WTC11 (cell line): ENCODE measurements at regions of chr16 and their contacts with region 1.

Region 1: GRCh38 chr16:27109666-27110523 is 43.2 kb downstream of the C16orf82 start:
- DNase-seq: peak; percentile 93
- ATAC-seq: peak; percentile 83
- H3K4me3 Mint-ChIP-seq: peak overlapping the region; percentile 75
- H3K27ac Mint-ChIP-seq: no peak overlapping the region
- H3K4me1 Mint-ChIP-seq: peaks cover 28% of the 10 kb centered on the region
- H3K27me3 Mint-ChIP-seq: peaks cover 7% of the 10 kb centered on the region; the same call in 1 of the 2 replicates
- CTCF ChIP-seq: peak; percentile 99

Region 2: DNA sequence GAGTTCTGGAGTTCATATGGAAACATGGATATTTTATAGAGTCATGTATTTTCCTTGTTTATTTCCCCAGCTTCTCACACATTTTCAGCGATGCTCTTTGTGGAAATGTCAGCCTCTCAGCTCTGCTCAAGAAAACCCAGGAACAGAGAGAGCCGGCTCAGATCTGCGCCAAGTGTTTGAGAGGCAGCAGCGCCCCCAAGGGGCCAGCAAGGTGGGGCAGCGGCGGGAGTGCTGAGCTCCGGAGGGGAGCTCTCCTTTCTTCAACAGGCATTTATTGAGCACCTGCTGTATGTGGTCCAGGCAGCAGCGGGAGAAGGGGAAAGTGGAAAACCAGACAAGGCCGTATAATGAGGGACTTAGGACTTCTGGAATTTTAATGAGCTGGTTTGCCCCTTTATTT is 464.3 kb before region 1 on chr16:
- CTCF ChIA-PET with region 1: interaction called, 22 read pairs
- POLR2A ChIA-PET with region 1: no interaction called
- DNase-seq: peak; percentile 80
- ATAC-seq: peak; percentile 95
- H3K4me3 Mint-ChIP-seq: no peak overlapping the region
- H3K27ac Mint-ChIP-seq: no peak overlapping the region
- H3K4me1 Mint-ChIP-seq: peaks cover 13% of the 10 kb centered on the region
- H3K27me3 Mint-ChIP-seq: no peaks in the 10 kb centered on the region
- CTCF ChIP-seq: peak; percentile 79

Region 3: GRCh38 chr16:26930786-26931581 is 178.9 kb before region 1 on chr16:
- CTCF ChIA-PET with region 1: interaction called, 13 read pairs
- POLR2A ChIA-PET with region 1: no interaction called
- DNase-seq: no peak
- ATAC-seq: no peak
- H3K4me3 Mint-ChIP-seq: no peak overlapping the region
- H3K27ac Mint-ChIP-seq: no peak overlapping the region
- H3K4me1 Mint-ChIP-seq: no peaks in the 10 kb centered on the region
- H3K27me3 Mint-ChIP-seq: peaks cover 3% of the 10 kb centered on the region; the same call in 1 of the 2 replicates
- CTCF ChIP-seq: no peak

Region 4: DNA sequence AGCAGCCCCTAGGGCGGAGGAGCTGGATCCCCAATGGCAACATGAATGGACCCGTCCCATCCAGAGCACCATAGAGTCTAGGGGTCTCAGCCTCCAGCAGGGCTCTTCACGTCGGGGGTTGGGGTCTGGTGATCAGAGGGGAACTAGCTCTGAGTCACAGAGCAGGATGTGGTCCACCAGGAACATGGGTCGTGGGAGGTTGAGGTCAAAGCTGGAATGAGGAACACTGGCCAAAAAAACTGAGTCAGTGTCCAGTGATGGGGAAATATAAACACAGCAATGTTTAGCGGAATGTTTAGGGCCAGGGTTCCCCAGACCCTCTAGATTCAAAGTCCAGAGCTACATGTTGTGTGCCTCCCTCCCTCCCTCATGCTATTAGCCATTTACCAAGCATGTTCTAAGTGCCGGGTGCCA is 122.3 kb before region 1 on chr16:
- CTCF ChIA-PET with region 1: interaction called, 33 read pairs
- POLR2A ChIA-PET with region 1: interaction called, 3 read pairs
- DNase-seq: no peak
- ATAC-seq: no peak
- H3K4me3 Mint-ChIP-seq: no peak overlapping the region
- H3K27ac Mint-ChIP-seq: peak overlapping the region; percentile 99; the same call in 1 of the 2 replicates
- H3K4me1 Mint-ChIP-seq: peaks cover 49% of the 10 kb centered on the region
- H3K27me3 Mint-ChIP-seq: peaks cover 6% of the 10 kb centered on the region; the same call in 1 of the 2 replicates
- CTCF ChIP-seq: no peak

Region 5: GRCh38 chr16:27066668-27067537 is 43.0 kb before region 1 on chr16 and contains the start of gene C16orf82:
- CTCF ChIA-PET with region 1: interaction called, 30 read pairs
- POLR2A ChIA-PET with region 1: no interaction called
- DNase-seq: peak; percentile 64
- ATAC-seq: peak; percentile 93
- H3K4me3 Mint-ChIP-seq: no peak within 1 kb of the TSS; the same call in 1 of the 2 replicates
- H3K27ac Mint-ChIP-seq: no peak within 1 kb of the TSS
- H3K4me1 Mint-ChIP-seq: peaks cover 6% of the 10 kb centered on the region
- H3K27me3 Mint-ChIP-seq: peaks cover 2% of the 10 kb centered on the region
- CTCF ChIP-seq: no peak
- total RNA-seq, gene C16orf82: not detected in 3 replicates

Region 6: GRCh38 chr16:27138266-27138665 is 28.4 kb after region 1 on chr16:
- CTCF ChIA-PET with region 1: interaction called, 5 read pairs
- POLR2A ChIA-PET with region 1: interaction called, 11 read pairs
- DNase-seq: no peak
- ATAC-seq: no peak
- H3K4me3 Mint-ChIP-seq: no peak overlapping the region
- H3K27ac Mint-ChIP-seq: no peak overlapping the region
- H3K4me1 Mint-ChIP-seq: peaks cover 8% of the 10 kb centered on the region
- H3K27me3 Mint-ChIP-seq: peaks cover 4% of the 10 kb centered on the region
- CTCF ChIP-seq: no peak

Region 7: GRCh38 chr16:27367461-27368357 is 257.8 kb after region 1 on chr16:
- CTCF ChIA-PET with region 1: interaction called, 15 read pairs
- POLR2A ChIA-PET with region 1: no interaction called
- DNase-seq: peak; percentile 83
- ATAC-seq: peak; percentile 88
- H3K4me3 Mint-ChIP-seq: peak overlapping the region; percentile 4; the same call in 1 of the 2 replicates
- H3K27ac Mint-ChIP-seq: no peak overlapping the region
- H3K4me1 Mint-ChIP-seq: peaks cover 3% of the 10 kb centered on the region; the same call in 1 of the 2 replicates
- H3K27me3 Mint-ChIP-seq: no peaks in the 10 kb centered on the region; the same call in 1 of the 2 replicates
- CTCF ChIP-seq: peak; percentile 74